CD4-positive, alpha-beta memory T cell (primary cell): ENCODE measurements at regions of chr19 and their contacts with region 1.

Region 1: GRCh38 chr19:41945135-41945766 is 13.9 kb downstream of the RABAC1 start:
- DNase-seq: peak; percentile 88 to 99 (median 90)
- H3K4me3 ChIP-seq: no peak overlapping the region
- H3K4me3 Mint-ChIP-seq: peak overlapping the region; percentile 59 to 86 (median 68)
- H3K27ac ChIP-seq: peak overlapping the region; percentile 41
- H3K27ac Mint-ChIP-seq: peak overlapping the region; percentile 95 to 100 (median 99)
- H3K4me1 ChIP-seq: peaks cover 38% of the 10 kb centered on the region
- H3K4me1 Mint-ChIP-seq: peaks cover 23 to 63% (median 38%) of the 10 kb centered on the region in 4 donors
- H3K27me3 ChIP-seq: no peaks in the 10 kb centered on the region
- H3K27me3 Mint-ChIP-seq: peaks cover 0 to 2% of the 10 kb centered on the region in 2 donors

Region 2: GRCh38 chr19:40035996-40036395 is 1909.3 kb before region 1 on chr19:
- CTCF ChIA-PET with region 1: no interaction called
- POLR2A ChIA-PET with region 1: no interaction called
- intact Hi-C with region 1: no loop called
- DNase-seq: no peak
- H3K4me3 ChIP-seq: no peak overlapping the region
- H3K4me3 Mint-ChIP-seq: no peak overlapping the region
- H3K27ac ChIP-seq: no peak overlapping the region
- H3K27ac Mint-ChIP-seq: no peak overlapping the region
- H3K4me1 ChIP-seq: no peaks in the 10 kb centered on the region
- H3K4me1 Mint-ChIP-seq: no peaks in the 10 kb centered on the region
- H3K27me3 ChIP-seq: no peaks in the 10 kb centered on the region
- H3K27me3 Mint-ChIP-seq: no peaks in the 10 kb centered on the region

Region 3: DNA sequence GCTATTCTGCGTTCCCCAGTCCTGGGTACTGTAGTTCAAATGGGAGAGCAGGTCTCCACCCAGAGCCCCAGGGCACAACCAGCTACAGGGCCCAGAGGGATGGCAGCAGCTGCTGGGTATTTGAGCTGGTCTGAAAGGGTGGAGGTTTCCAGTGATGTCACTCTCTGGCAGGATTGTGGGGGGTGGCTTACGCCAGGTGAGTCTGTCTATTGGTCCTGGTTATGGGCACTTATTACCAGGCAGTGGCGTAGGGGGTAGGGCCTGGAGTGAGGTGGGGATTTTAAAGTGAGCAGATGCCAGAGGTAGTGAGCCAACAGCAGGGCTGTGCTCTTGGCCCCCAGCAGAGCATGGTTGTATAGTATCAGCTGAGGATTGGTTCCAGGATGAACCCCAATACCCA is 79.0 kb before region 1 on chr19:
- CTCF ChIA-PET with region 1: interaction called, 85 read pairs
- POLR2A ChIA-PET with region 1: interaction called, 69 read pairs
- intact Hi-C with region 1: no loop called
- DNase-seq: peak in 1 of 5 donors; percentile 33
- H3K4me3 ChIP-seq: no peak overlapping the region
- H3K4me3 Mint-ChIP-seq: peak overlapping the region in 3 of 8 donors; percentile 15 to 59 (median 50)
- H3K27ac ChIP-seq: peak overlapping the region; percentile 22
- H3K27ac Mint-ChIP-seq: peak overlapping the region; percentile 71 to 93 (median 81)
- H3K4me1 ChIP-seq: peaks cover 94% of the 10 kb centered on the region
- H3K4me1 Mint-ChIP-seq: peaks cover 45 to 84% (median 67%) of the 10 kb centered on the region in 4 donors
- H3K27me3 ChIP-seq: no peaks in the 10 kb centered on the region
- H3K27me3 Mint-ChIP-seq: no peaks in the 10 kb centered on the region

Region 4: DNA sequence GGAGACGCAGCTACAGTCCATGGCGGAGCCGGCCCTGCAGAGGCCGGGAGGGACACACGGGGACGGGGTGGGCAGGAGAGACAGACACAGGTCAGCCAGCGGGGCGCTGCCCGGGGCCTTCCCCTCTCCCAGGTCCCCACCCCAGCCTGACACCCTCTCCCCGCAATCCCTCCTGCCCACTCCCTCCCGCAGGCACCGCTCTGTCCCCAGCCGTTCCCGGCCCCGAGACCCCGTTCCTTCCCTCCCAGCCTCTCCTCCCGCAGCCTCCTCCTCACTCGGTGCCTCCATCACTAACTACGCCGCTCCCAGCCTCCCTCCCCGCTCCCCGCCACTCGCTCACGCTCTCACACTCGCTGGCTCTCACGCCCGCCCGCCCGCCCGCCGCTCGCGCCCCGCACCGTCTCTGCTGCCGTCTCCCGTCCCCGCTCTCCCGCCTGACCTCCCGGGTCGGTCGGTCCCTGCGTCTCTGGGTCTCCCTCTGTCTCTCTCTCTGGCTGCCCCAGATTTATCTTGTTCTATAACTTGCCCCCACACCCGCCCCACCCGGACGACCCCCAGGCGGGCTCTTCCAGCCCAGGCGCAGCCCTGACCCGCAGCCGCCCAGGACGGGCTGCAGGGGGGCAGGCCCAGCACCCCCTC is 32.2 kb before region 1 on chr19:
- CTCF ChIA-PET with region 1: no interaction called
- POLR2A ChIA-PET with region 1: interaction called, 22 read pairs
- intact Hi-C with region 1: loop called (anchors 5 kb)
- DNase-seq: peak in 2 of 5 donors; percentile 39 to 43
- H3K4me3 ChIP-seq: no peak overlapping the region
- H3K4me3 Mint-ChIP-seq: peak overlapping the region in 4 of 8 donors; percentile 9 to 57 (median 32)
- H3K27ac ChIP-seq: no peak overlapping the region
- H3K27ac Mint-ChIP-seq: peak overlapping the region in 3 of 7 donors; percentile 43 to 75 (median 67)
- H3K4me1 ChIP-seq: peaks cover 45% of the 10 kb centered on the region
- H3K4me1 Mint-ChIP-seq: peaks cover 25 to 51% (median 26%) of the 10 kb centered on the region in 4 donors
- H3K27me3 ChIP-seq: peaks cover 23% of the 10 kb centered on the region
- H3K27me3 Mint-ChIP-seq: peaks cover 7 to 14% of the 10 kb centered on the region in 2 donors

Region 5: GRCh38 chr19:41959056-41960053 is 14.1 kb after region 1 on chr19 and contains the start of gene RABAC1:
- CTCF ChIA-PET with region 1: interaction called, 13 read pairs
- POLR2A ChIA-PET with region 1: interaction called, 24 read pairs
- intact Hi-C with region 1: no loop called
- DNase-seq: peak; percentile 83 to 93 (median 85)
- H3K4me3 ChIP-seq: peak within 1 kb of the TSS; percentile 73 to 85
- H3K4me3 Mint-ChIP-seq: peak within 1 kb of the TSS; percentile 90 to 97 (median 96)
- H3K27ac ChIP-seq: peak within 1 kb of the TSS; percentile 77
- H3K27ac Mint-ChIP-seq: peak within 1 kb of the TSS; percentile 82 to 99 (median 96)
- H3K4me1 ChIP-seq: peaks cover 16% of the 10 kb centered on the region
- H3K4me1 Mint-ChIP-seq: peaks cover 10 to 26% (median 17%) of the 10 kb centered on the region in 4 donors
- H3K27me3 ChIP-seq: no peaks in the 10 kb centered on the region
- H3K27me3 Mint-ChIP-seq: no peaks in the 10 kb centered on the region
- total RNA-seq, gene RABAC1: 97.4 to 100 TPM

Region 6: GRCh38 chr19:41993612-41994483 is 48.6 kb after region 1 on chr19 and contains the start of gene ATP1A3:
- CTCF ChIA-PET with region 1: no interaction called
- POLR2A ChIA-PET with region 1: no interaction called
- intact Hi-C with region 1: no loop called
- DNase-seq: peak; percentile 43 to 73 (median 55)
- H3K4me3 ChIP-seq: peak within 1 kb of the TSS in 1 of 2 donors; percentile 55
- H3K4me3 Mint-ChIP-seq: peak within 1 kb of the TSS; percentile 71 to 87 (median 85)
- H3K27ac ChIP-seq: no peak within 1 kb of the TSS
- H3K27ac Mint-ChIP-seq: peak within 1 kb of the TSS in 6 of 7 donors; percentile 10 to 95 (median 78)
- H3K4me1 ChIP-seq: peaks cover 28% of the 10 kb centered on the region
- H3K4me1 Mint-ChIP-seq: peaks cover 18 to 40% (median 24%) of the 10 kb centered on the region in 4 donors
- H3K27me3 ChIP-seq: peaks cover 25% of the 10 kb centered on the region
- H3K27me3 Mint-ChIP-seq: peaks cover 31 to 33% of the 10 kb centered on the region in 2 donors
- total RNA-seq, gene ATP1A3: 2.7 to 3.5 TPM